ENCODE measurements at regions of chr9 and their contacts with region 1.

Region 1: DNA sequence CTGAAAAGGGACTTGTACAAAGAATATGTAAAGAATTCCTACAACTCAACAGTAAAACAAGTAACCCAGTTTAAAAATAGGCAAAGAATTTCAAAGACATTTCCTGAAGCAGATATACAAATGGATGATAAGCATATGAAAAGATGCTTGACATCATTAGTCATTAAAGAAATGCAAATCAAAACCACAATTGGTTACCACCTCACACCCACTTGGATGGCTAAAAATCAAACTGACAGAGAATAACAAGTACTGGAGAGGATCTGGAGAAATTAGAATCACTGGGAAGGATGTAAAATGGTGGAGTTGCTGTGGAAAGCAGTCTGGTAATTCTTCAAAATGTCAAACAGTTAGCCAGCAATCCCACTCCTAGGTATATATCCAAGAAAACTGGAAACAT is 12.5 kb upstream of the FOXE1 start:
- DNase-seq: no peak
- ATAC-seq: no peak
- H3K4me3 ChIP-seq: no peak overlapping the region
- H3K4me3 Mint-ChIP-seq: no peak overlapping the region
- H3K27ac ChIP-seq: no peak overlapping the region
- H3K27ac Mint-ChIP-seq: peak overlapping the region in 1 of 2 donors; percentile 58
- H3K4me1 ChIP-seq: no peaks in the 10 kb centered on the region
- H3K4me1 Mint-ChIP-seq: no peaks in the 10 kb centered on the region
- H3K27me3 ChIP-seq: peaks cover 14 to 21% of the 10 kb centered on the region in 2 experiments
- H3K27me3 Mint-ChIP-seq: peaks cover 50 to 56% of the 10 kb centered on the region in 2 donors

Region 2: GRCh38 chr9:97820373-97820772 is 20.1 kb before region 1 on chr9:
- CTCF ChIA-PET with region 1: no interaction called
- POLR2A ChIA-PET with region 1: no interaction called
- DNase-seq: no peak
- ATAC-seq: no peak
- H3K4me3 ChIP-seq: no peak overlapping the region
- H3K4me3 Mint-ChIP-seq: no peak overlapping the region
- H3K27ac ChIP-seq: no peak overlapping the region
- H3K27ac Mint-ChIP-seq: no peak overlapping the region
- H3K4me1 ChIP-seq: no peaks in the 10 kb centered on the region
- H3K4me1 Mint-ChIP-seq: no peaks in the 10 kb centered on the region
- H3K27me3 ChIP-seq: peaks cover 6 to 18% of the 10 kb centered on the region in 2 experiments
- H3K27me3 Mint-ChIP-seq: peaks cover 48% of the 10 kb centered on the region in 2 donors

Region 3: DNA sequence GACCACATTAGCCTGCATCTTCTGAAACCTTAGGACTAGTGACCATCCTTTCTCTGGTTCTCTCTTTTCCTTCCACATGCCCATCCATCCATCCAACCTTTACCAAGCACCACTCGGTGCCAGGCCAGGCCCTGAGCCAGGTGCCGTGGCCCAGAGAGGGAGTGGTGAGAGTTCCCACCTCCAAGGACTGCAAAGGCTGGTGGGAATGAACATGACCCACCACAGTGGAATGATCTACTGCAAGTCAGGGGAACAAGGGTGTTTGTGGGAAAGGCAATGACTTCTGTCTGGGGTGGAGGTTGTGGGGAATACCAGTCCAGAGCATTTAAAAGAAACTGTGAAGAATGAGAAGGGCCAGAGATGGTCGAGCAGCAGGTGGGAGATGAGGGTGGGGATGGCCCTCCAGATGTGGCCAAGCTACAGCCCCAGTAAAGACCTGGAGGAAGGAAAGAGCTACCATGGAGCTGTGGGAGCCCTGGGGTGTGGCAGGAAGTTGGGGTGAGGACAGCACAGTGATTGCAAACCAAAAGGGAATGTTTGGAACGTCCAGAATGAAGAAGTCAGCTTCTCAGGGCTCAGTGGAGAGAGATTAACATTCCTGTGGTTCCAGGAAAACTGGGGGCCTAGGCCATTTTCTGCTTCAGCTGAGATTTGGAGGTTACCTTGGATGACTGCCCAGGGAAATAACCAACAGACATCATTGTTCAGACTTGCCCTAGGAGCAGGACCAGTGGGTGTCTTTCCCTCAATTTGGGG is 382.5 kb after region 1 on chr9:
- CTCF ChIA-PET with region 1: no interaction called
- POLR2A ChIA-PET with region 1: interaction called in 1 of 2 experiments, 11 read pairs
- DNase-seq: no peak
- ATAC-seq: no peak
- H3K4me3 ChIP-seq: no peak overlapping the region
- H3K4me3 Mint-ChIP-seq: no peak overlapping the region
- H3K27ac ChIP-seq: no peak overlapping the region
- H3K27ac Mint-ChIP-seq: peak overlapping the region in 1 of 2 donors; percentile 32
- H3K4me1 ChIP-seq: no peaks in the 10 kb centered on the region
- H3K4me1 Mint-ChIP-seq: peaks cover 0 to 3% (median 0%) of the 10 kb centered on the region in 3 donors
- H3K27me3 ChIP-seq: no peaks in the 10 kb centered on the region
- H3K27me3 Mint-ChIP-seq: no peaks in the 10 kb centered on the region